OCI-LY7 (cell line): ENCODE measurements at regions of chr2 and their contacts with region 1.

Region 1: GRCh38 chr2:136314240-136314639 is 196.3 kb upstream of the CXCR4 start:
- DNase-seq: no peak
- H3K4me3 ChIP-seq: no peak overlapping the region
- H3K27ac ChIP-seq: no peak overlapping the region
- H3K4me1 ChIP-seq: peaks cover 12% of the 10 kb centered on the region
- CTCF ChIP-seq: no peak

Region 2: GRCh38 chr2:135913727-135914365 is 400.4 kb before region 1 on chr2:
- CTCF ChIA-PET with region 1: no interaction called
- POLR2A ChIA-PET with region 1: no interaction called
- intact Hi-C with region 1: no loop called
- DNase-seq: peak; percentile 73
- H3K4me3 ChIP-seq: no peak overlapping the region
- H3K27ac ChIP-seq: peak overlapping the region; percentile 5
- H3K4me1 ChIP-seq: peaks cover 27% of the 10 kb centered on the region
- CTCF ChIP-seq: peak; percentile 96

Region 3: DNA sequence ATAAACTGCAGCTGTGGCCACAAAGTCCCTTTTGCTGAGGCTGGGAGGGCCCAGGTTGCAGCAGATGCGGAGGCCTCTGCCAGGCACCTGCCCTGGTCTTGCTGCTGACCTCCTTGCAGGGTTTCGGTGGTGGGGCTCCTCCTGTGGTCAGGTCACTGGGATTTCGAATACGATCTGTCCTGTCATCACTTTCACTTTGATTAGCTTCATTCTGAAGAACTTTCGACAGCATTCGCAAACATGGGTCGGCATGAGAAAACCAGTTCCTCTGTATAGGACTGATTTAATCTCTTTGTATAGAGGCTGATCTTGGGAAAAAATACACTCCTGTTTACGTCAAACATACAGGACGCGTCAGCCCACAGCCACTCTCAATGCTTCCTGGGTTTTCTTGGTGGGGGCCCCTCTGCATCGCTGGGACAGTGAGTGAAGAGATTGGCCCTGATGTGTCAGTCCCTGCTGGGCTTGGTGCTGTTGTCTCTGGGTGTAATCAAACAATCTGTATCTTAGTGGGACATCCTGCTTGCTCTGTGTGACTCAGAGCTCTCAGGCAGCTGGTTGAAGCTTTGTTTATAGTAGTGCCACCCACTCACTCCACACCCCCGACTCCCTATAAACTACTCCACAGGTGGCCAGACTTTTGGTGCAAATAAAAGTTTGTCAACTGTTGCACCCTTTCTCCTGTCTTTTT is 13.1 kb after region 1 on chr2:
- CTCF ChIA-PET with region 1: no interaction called
- POLR2A ChIA-PET with region 1: interaction called, 18 read pairs
- intact Hi-C with region 1: no loop called
- DNase-seq: peak; percentile 78
- H3K4me3 ChIP-seq: peak overlapping the region; percentile 63
- H3K27ac ChIP-seq: peak overlapping the region; percentile 81
- H3K4me1 ChIP-seq: peaks cover 74% of the 10 kb centered on the region
- CTCF ChIP-seq: no peak; the same call in 1 of the 2 replicates